ENCODE measurements at regions of chr21 and their contacts with region 1.

Region 1: GRCh38 chr21:29298348-29299045 is at the start of gene BACH1:
- DNase-seq: peak; percentile 71 to 92 (median 84)
- ATAC-seq: peak; percentile 67
- H3K4me3 ChIP-seq: peak within 1 kb of the TSS; percentile 63 to 68
- H3K4me3 Mint-ChIP-seq: peak within 1 kb of the TSS; percentile 87
- H3K27ac ChIP-seq: peak within 1 kb of the TSS; percentile 39 to 41
- H3K27ac Mint-ChIP-seq: peak within 1 kb of the TSS; percentile 88
- H3K4me1 ChIP-seq: peaks cover 54% of the 10 kb centered on the region
- H3K4me1 Mint-ChIP-seq: peaks cover 78% of the 10 kb centered on the region
- H3K27me3 ChIP-seq: no peaks in the 10 kb centered on the region
- H3K27me3 Mint-ChIP-seq: no peaks in the 10 kb centered on the region
- CTCF ChIP-seq: peak; percentile 33
- total RNA-seq, gene BACH1: 86.3 to 88.5 TPM

Region 2: DNA sequence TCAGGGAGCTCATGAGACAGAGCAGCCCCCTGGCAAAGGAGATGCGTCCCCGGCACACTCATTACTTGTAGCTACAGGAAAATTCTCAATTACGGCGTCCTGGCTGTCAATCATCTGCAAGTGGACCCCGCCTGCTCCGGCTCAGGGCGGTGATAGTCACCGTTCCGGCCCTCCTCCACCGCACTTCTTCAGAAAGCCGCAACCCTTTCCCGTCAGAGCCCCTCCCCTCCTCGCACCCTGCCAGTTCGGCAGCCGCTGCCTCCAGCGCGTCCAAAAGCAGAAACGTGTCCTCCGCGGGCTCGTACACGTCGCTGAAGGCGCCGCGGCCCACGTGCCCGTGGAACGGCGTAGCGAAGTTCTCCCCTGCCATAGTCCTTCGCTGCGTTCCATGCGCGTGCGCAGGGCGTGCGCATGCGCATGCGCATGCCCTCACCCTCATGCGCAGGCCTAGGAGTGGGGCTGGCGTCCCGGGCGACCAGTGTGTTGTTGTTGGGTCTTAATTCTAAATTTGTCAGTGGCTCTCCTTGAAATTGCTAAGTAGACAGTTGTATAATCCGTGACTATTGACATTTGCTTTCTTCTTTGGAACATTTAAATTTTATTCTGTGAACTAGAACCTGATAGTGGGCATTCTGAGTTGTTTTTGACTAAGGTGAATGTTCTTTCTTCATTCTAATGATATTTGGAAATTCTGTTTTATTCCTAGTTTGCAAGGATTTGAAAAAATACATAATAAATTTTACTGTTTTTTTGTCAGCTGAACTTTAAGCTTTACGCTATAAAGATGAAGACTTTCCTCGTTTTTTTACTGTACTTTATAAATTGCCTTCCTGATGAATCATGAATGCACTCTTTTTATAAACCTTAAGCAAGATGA is 413.3 kb before region 1 on chr21:
- CTCF ChIA-PET with region 1: interaction called, 3 read pairs
- POLR2A ChIA-PET with region 1: no interaction called
- intact Hi-C with region 1: loop called (anchors 1 to 2 kb)
- DNase-seq: peak; percentile 81 to 98 (median 90)
- ATAC-seq: peak; percentile 91
- H3K4me3 ChIP-seq: peak overlapping the region; percentile 68
- H3K4me3 Mint-ChIP-seq: peak overlapping the region; percentile 92
- H3K27ac ChIP-seq: peak overlapping the region; percentile 87 to 93
- H3K27ac Mint-ChIP-seq: peak overlapping the region; percentile 99
- H3K4me1 ChIP-seq: peaks cover 20% of the 10 kb centered on the region
- H3K4me1 Mint-ChIP-seq: peaks cover 20% of the 10 kb centered on the region
- H3K27me3 ChIP-seq: no peaks in the 10 kb centered on the region
- H3K27me3 Mint-ChIP-seq: no peaks in the 10 kb centered on the region
- CTCF ChIP-seq: no peak

Region 3: DNA sequence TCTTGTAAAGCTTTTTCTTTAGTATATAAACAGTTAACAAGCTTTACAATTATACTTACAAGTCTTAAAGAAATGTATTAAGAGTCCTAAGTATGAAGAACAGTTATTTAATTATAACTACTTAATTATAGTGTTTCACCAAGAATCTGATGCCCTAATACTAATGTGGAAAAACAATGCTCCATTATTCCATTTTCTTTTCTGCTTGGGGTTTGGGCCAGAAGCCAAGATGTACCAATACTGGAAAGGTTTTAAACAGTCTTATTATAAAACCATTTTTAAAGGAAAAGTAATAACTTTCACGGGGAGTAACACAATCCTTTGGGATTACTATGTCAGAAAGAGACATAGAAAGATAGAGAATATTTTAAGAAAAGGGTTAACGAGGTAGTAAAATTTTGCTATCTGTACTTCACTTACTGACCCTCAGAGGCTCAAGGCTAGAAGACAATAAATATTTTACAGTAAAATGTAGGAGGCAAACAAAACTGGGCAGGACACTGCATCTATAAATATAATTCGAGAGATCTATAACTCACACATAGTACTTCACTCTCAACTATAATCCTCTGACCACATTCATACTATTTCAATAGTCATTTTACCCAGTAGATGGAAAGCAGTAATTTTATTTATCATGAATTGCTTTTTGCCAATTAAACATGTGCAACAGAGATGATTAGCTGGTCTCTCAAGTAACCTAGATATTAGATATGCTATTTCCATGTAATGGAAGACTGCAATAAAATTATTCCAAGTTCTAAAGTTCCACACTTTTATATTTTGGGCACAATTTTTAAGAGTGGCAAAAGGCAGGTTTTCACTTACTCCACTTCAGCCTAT is 369.7 kb before region 1 on chr21:
- CTCF ChIA-PET with region 1: no interaction called
- POLR2A ChIA-PET with region 1: no interaction called
- intact Hi-C with region 1: no loop called
- DNase-seq: no peak
- ATAC-seq: no peak
- H3K4me3 ChIP-seq: no peak overlapping the region
- H3K4me3 Mint-ChIP-seq: no peak overlapping the region
- H3K27ac ChIP-seq: no peak overlapping the region
- H3K27ac Mint-ChIP-seq: no peak overlapping the region
- H3K4me1 ChIP-seq: no peaks in the 10 kb centered on the region
- H3K4me1 Mint-ChIP-seq: no peaks in the 10 kb centered on the region
- H3K27me3 ChIP-seq: no peaks in the 10 kb centered on the region
- H3K27me3 Mint-ChIP-seq: no peaks in the 10 kb centered on the region
- CTCF ChIP-seq: no peak

Region 4: DNA sequence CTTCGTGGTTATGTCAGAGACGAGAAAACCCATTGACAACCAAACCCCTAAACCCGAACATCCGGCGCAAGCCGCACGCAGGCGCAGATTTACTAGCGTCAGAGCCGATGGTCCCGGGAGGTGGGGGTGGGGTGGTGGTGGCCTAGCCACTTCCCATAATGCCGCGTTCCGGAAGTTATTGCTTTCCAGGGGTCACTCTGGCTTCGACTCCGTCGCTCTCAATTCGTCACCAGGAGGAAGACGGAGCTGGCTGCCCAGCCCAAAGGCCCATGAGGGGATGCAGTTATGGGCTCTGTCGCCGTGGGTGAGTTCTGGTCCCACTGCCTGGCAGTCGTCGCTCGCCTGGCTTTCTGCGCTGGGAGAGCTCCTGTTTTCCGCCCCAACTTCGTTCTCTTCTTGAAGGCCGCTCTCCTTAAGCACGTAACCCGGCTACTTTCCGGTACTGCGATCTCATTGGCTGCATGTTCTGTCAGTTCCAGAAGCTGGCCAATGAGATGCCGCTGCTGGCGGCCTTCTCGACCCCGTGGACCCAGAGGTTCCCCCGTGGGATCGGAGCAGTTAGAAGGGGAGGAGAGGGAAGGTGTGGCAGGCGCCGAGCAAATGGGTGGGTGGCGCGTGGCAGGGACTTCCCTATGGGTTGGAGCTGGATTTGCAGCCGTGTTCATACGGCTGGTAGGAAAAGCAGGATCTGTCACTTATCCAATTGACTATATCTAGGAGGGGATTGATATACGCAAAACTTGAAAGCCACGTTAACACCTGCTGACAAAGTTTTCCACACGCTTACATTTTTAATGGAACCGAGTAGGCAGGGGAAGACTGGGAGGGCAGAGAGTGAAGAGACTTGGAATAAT is 273.8 kb before region 1 on chr21 and contains the start of gene USP16:
- CTCF ChIA-PET with region 1: no interaction called
- POLR2A ChIA-PET with region 1: interaction called, 6 read pairs
- intact Hi-C with region 1: loop called in 1 of 2 experiments (anchors 1 kb)
- DNase-seq: peak; percentile 87 to 98 (median 94)
- ATAC-seq: peak; percentile 87
- H3K4me3 ChIP-seq: peak within 1 kb of the TSS; percentile 65 to 91
- H3K4me3 Mint-ChIP-seq: peak within 1 kb of the TSS; percentile 95
- H3K27ac ChIP-seq: peak within 1 kb of the TSS; percentile 93 to 98
- H3K27ac Mint-ChIP-seq: peak within 1 kb of the TSS; percentile 100
- H3K4me1 ChIP-seq: peaks cover 45% of the 10 kb centered on the region
- H3K4me1 Mint-ChIP-seq: peaks cover 59% of the 10 kb centered on the region
- H3K27me3 ChIP-seq: no peaks in the 10 kb centered on the region
- H3K27me3 Mint-ChIP-seq: no peaks in the 10 kb centered on the region
- CTCF ChIP-seq: no peak
- total RNA-seq, gene USP16: 84.8 to 91.2 TPM

Region 5: DNA sequence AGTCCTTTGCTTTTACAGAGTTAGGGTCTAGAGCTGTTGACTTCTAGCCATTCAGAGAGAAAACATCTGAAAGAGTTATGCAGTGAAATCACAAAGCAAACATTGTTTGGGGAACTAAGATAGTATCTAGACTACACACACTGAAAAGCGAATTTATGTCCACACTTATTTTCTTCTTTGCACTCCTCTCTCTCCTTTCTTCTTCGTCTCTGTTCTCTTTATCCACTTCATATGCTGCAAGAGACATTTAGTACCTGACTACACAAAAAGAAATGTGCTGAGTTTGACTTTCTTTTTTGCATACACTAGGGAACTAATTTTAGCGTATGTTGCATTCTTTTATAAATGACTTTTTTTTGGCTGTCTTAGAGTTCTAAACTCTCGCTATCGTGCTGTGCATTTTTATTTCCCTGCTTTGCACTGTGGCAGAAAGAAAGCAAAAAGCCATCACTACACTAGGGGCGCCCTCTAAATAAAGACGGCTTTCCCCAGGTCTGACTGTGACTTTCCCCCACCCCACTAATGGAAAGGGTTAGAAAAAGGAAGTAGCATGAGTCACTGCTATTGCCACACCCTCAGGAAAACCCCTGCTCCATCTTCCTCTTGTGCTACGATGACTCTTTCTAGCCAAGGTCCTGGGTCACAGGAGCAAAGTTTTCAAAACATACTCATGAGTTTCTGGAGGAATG is 102.4 kb before region 1 on chr21:
- CTCF ChIA-PET with region 1: no interaction called
- POLR2A ChIA-PET with region 1: no interaction called
- intact Hi-C with region 1: loop called in 1 of 2 experiments (anchors 2 kb)
- DNase-seq: peak in 8 of 9 experiments; percentile 31 to 82 (median 54)
- ATAC-seq: peak; percentile 97
- H3K4me3 ChIP-seq: peak overlapping the region in 1 of 2 experiments; percentile 14
- H3K4me3 Mint-ChIP-seq: peak overlapping the region; percentile 59
- H3K27ac ChIP-seq: no peak overlapping the region
- H3K27ac Mint-ChIP-seq: peak overlapping the region; percentile 67
- H3K4me1 ChIP-seq: peaks cover 4% of the 10 kb centered on the region
- H3K4me1 Mint-ChIP-seq: peaks cover 16% of the 10 kb centered on the region
- H3K27me3 ChIP-seq: no peaks in the 10 kb centered on the region
- H3K27me3 Mint-ChIP-seq: peaks cover 2% of the 10 kb centered on the region
- CTCF ChIP-seq: peak; percentile 24

Region 6: DNA sequence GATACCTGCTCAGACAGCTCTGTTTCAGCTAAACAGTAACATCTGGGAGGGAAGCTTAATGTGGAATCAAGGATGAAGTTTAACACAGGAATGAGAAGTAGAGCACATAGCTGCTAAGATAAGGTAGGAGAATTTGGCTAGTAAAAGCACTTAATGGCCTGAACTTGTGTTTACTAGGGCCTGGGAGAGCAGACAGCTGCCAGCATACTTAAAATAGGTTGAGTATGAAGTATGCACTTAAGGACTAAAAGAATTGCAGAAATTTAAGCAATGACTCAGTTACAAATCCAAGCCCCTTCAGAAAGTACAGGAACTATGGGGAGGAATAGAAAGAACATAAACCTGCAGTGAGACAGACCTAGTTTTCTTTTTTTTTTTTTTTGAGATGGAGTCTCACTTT is 53.2 kb after region 1 on chr21:
- CTCF ChIA-PET with region 1: interaction called, 11 read pairs
- POLR2A ChIA-PET with region 1: no interaction called
- intact Hi-C with region 1: loop called in 1 of 2 experiments (anchors 2 kb)
- DNase-seq: no peak
- ATAC-seq: no peak
- H3K4me3 ChIP-seq: no peak overlapping the region
- H3K4me3 Mint-ChIP-seq: no peak overlapping the region
- H3K27ac ChIP-seq: no peak overlapping the region
- H3K27ac Mint-ChIP-seq: no peak overlapping the region
- H3K4me1 ChIP-seq: peaks cover 8% of the 10 kb centered on the region
- H3K4me1 Mint-ChIP-seq: peaks cover 13% of the 10 kb centered on the region
- H3K27me3 ChIP-seq: no peaks in the 10 kb centered on the region
- H3K27me3 Mint-ChIP-seq: no peaks in the 10 kb centered on the region
- CTCF ChIP-seq: no peak

Region 7: DNA sequence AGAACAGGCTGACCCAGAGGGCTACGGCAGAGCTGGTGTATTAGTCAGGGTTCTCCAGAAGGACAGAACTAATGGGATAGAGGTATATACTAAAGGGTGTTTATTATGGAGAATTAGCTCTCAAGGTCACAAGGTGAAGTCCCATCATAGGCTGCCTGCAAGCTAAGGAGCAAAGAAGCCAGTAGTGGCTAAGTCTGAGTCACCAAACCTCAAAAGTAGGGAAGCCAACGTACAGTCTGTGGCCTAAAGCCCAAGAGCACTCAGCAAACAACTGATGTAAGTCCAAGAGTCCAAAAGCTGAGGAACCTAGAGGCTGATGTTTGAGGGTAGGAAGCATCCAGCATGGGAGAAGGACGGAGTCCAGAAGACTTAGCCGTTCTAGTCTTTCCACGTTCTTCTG is 179.4 kb after region 1 on chr21:
- CTCF ChIA-PET with region 1: no interaction called
- POLR2A ChIA-PET with region 1: no interaction called
- intact Hi-C with region 1: loop called in 1 of 2 experiments (anchors 10 kb)
- DNase-seq: no peak
- ATAC-seq: no peak
- H3K4me3 ChIP-seq: no peak overlapping the region
- H3K4me3 Mint-ChIP-seq: no peak overlapping the region
- H3K27ac ChIP-seq: no peak overlapping the region
- H3K27ac Mint-ChIP-seq: no peak overlapping the region
- H3K4me1 ChIP-seq: no peaks in the 10 kb centered on the region
- H3K4me1 Mint-ChIP-seq: peaks cover 19% of the 10 kb centered on the region
- H3K27me3 ChIP-seq: no peaks in the 10 kb centered on the region
- H3K27me3 Mint-ChIP-seq: no peaks in the 10 kb centered on the region
- CTCF ChIP-seq: no peak

Region 8: DNA sequence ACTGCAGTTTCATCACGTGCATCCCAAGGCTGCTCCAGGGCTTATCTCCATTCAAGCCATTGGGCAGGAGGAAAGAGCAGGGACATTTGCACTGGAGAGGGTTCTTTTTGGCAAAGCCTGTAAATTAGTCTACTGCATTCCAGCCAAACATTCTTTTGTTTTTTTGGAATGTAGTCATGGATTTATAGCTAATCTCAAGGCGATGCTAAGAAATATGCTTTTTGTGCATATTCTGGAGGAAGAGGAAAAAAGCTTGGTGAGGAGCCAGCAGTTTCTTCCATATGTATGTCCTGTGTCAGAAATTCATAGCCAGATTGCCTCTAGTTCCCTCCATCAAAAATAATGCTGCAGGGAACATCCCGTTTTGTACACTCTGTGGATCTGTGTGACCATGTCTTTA is 221.7 kb after region 1 on chr21:
- CTCF ChIA-PET with region 1: no interaction called
- POLR2A ChIA-PET with region 1: no interaction called
- intact Hi-C with region 1: no loop called
- DNase-seq: no peak
- ATAC-seq: no peak
- H3K4me3 ChIP-seq: no peak overlapping the region
- H3K4me3 Mint-ChIP-seq: no peak overlapping the region
- H3K27ac ChIP-seq: no peak overlapping the region
- H3K27ac Mint-ChIP-seq: no peak overlapping the region
- H3K4me1 ChIP-seq: no peaks in the 10 kb centered on the region
- H3K4me1 Mint-ChIP-seq: no peaks in the 10 kb centered on the region
- H3K27me3 ChIP-seq: no peaks in the 10 kb centered on the region
- H3K27me3 Mint-ChIP-seq: no peaks in the 10 kb centered on the region
- CTCF ChIP-seq: no peak